ENCODE measurements at regions of chrX and their contacts with region 1.

Region 1: DNA sequence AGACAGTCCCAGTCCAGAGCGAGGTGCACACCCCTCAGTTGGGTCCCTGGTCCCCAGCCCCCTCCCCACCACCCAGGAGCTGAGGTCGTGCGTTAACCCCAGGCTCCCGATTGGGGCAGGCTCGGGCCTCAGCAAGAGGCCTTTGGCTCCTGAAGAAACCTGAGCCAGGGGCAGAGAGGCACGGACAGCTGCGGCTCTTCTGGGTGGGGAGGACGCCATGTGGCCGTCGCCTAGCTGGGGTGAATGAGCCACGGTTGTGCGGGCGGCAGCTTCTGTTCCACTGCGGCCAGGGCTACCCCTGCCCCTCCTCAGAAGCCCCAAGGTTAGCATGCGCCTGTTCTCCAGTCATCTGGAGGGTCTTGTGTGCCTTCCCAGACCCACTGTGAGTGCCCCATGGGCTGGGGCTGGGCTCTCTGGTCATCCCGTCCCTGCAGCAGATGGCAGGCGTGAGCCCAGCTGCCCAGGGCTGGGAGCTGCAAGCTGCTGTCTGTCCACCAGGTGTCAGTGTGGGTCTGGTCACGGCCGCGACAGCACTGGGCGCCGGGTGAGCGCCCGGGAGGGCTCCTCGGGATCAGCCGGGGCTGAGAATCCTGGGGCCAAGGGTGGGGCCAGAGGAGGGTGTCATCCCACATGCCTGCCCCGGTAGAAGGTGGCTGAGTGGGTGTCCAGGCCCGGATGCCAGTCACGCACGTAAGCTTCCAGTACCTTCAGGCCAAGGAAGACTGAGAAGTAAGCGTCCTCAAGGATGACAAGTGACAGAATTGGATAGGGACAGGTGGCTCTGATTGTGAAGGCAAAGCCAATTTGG is 21.9 kb downstream of the ATP2B3 start:
- DNase-seq: peak; percentile 23
- ATAC-seq: peak; percentile 89
- H3K4me3 ChIP-seq: no peak overlapping the region
- H3K27ac ChIP-seq: no peak overlapping the region
- H3K4me1 ChIP-seq: 0 out of 2 replicates have a peak, but pooled peaks cover 5% of the 10 kb centered on the region
- H3K27me3 ChIP-seq: peaks cover 8 to 48% of the 10 kb centered on the region in 2 experiments; a peak in 4 of 5 replicates
- CTCF ChIP-seq: peak; percentile 93
- EP300 ChIP-seq: no peak
- POLR2A ChIP-seq: no peak
- RAD21 ChIP-seq: peak; percentile 82

Region 2: DNA sequence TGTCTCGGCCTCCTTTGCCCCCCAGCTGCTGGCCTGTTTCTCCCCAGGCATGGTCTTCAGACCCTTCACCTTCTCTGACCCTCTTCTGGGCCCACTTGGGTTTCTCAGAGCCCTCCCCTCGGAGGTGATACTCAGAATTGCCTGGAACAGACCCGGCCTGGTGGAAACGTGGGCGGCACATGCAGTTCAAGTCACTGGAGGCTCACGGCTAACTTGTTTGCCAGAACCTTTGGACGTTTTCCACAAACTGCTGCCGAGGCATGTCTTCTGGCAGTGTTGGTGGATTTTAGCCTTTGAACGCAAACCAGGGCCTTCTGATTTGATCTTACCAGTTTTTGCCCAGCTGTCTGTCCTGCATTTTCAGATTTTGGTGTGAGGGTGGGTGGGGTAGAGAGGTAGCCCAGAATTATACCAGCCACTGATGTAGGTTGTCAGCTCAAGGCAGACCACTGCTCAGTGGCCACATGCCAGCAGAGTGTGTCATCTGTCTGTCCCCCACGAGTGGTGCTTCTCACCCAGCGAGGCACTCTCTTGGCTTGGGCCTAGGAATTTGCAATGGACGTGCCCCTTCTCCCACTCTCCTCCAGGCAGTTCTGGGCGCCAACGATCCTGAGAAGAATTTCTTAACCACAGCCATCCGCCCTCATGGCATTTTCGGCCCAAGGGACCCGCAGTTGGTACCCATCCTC is 674.0 kb before region 1 on chrX:
- CTCF ChIA-PET with region 1: no interaction called
- POLR2A ChIA-PET with region 1: no interaction called
- in situ Hi-C with region 1: no loop called
- intact Hi-C with region 1: loop called (anchors 5 kb)
- DNase-seq: no peak
- ATAC-seq: no peak
- H3K4me3 ChIP-seq: no peak overlapping the region
- H3K27ac ChIP-seq: no peak overlapping the region
- H3K4me1 ChIP-seq: no peaks in the 10 kb centered on the region
- H3K27me3 ChIP-seq: no peaks in the 10 kb centered on the region
- CTCF ChIP-seq: no peak
- EP300 ChIP-seq: no peak
- POLR2A ChIP-seq: no peak
- RAD21 ChIP-seq: no peak